ENCODE measurements at regions of chr11 and their contacts with region 1.

Region 1: DNA sequence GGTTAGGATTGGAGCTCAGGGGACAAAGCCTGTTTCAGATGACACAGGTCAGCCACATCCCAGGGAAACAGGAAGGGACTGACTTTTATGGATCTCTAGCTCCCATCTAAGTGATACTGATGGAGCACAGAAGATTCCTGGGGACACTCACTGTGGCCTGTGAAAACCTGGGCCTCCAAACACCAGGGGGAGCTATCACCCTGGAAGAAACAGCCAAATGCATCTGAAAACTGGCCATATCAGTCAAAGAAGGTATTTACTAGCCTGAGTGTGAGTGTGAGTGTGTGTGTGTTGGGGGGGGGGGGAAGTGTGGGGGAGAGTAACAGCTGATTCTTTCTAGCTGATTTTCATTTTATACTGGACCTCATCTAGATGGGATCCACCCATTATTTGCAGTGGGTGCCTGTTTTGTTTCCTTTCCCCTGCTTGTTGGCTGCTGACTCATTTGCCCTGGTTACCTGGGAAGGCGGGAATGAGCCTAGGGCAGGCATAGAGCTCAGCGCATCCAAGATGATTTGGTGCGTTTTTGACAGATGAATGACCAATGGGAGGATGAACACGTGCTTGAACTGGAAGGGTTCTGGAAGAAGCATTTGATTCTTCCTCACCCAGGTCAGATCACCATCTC is 284.0 kb downstream of the KIRREL3 start:
- DNase-seq: peak; percentile 3
- ATAC-seq: peak; percentile 75
- H3K4me3 ChIP-seq: no peak overlapping the region
- H3K27ac ChIP-seq: no peak overlapping the region
- H3K4me1 ChIP-seq: no peaks in the 10 kb centered on the region
- H3K27me3 ChIP-seq: peaks cover 1 to 27% of the 10 kb centered on the region in 2 experiments; a peak in 4 of 5 replicates
- CTCF ChIP-seq: peak; percentile 68
- EP300 ChIP-seq: no peak
- POLR2A ChIP-seq: no peak
- RAD21 ChIP-seq: no peak

Region 2: DNA sequence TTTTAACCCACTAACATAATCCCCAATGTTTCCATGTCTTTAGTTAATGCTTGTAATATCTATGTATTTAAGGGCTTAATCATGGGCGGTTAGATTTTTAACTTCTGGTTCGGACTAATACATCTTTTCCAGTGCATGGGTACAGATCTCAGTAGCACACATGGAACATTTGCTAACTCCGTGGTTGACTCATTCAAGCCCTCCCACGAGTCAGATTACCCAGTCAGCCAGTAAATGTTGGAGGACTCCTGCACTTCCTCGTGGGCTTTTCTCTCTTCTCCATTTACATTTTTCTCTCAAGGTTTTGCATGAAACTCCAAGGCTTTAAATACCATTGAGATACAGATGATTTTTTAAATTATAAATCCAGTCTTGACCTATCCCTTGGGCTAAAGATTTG is 47.2 kb before region 1 on chr11:
- CTCF ChIA-PET with region 1: no interaction called
- POLR2A ChIA-PET with region 1: no interaction called
- in situ Hi-C with region 1: no loop called
- intact Hi-C with region 1: no loop called
- DNase-seq: no peak
- ATAC-seq: no peak
- H3K4me3 ChIP-seq: no peak overlapping the region
- H3K27ac ChIP-seq: no peak overlapping the region
- H3K4me1 ChIP-seq: no peaks in the 10 kb centered on the region
- H3K27me3 ChIP-seq: peaks cover 1 to 8% of the 10 kb centered on the region in 2 experiments; a peak in 2 of 5 replicates
- CTCF ChIP-seq: no peak
- EP300 ChIP-seq: no peak
- POLR2A ChIP-seq: no peak
- RAD21 ChIP-seq: no peak

Region 3: DNA sequence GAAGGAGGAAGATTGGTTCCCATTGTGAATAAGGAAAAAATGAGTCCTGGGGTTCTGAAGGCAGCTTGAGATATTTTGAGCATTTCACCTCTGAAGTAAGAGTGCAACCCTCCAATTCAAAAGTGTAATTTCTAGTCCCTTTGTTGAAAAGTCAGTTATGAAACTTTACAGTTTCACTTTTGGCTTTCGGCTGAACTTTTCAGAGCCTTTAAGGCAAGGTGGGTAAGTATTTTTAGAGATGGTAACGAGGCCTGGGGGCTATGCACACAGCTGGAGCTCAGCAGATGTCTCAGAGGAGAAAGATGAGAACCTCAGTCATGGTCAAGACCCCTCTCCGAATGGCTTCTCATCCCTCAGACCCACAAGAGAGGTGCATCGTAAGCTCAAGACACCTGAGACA is 16.4 kb after region 1 on chr11:
- CTCF ChIA-PET with region 1: no interaction called
- POLR2A ChIA-PET with region 1: no interaction called
- in situ Hi-C with region 1: no loop called
- intact Hi-C with region 1: no loop called
- DNase-seq: no peak
- ATAC-seq: no peak
- H3K4me3 ChIP-seq: no peak overlapping the region
- H3K27ac ChIP-seq: no peak overlapping the region
- H3K4me1 ChIP-seq: no peaks in the 10 kb centered on the region
- H3K27me3 ChIP-seq: peaks cover 3 to 22% of the 10 kb centered on the region in 2 experiments; a peak in 2 of 5 replicates
- CTCF ChIP-seq: no peak
- EP300 ChIP-seq: no peak
- POLR2A ChIP-seq: no peak
- RAD21 ChIP-seq: no peak

Region 4: GRCh38 chr11:126989942-126990715 is 273.6 kb after region 1 on chr11:
- CTCF ChIA-PET with region 1: interaction called, 14 read pairs
- POLR2A ChIA-PET with region 1: no interaction called
- in situ Hi-C with region 1: loop called (anchors 5 kb)
- intact Hi-C with region 1: loop called (anchors 1 kb)
- DNase-seq: peak; percentile 38
- ATAC-seq: peak; percentile 97
- H3K4me3 ChIP-seq: no peak overlapping the region
- H3K27ac ChIP-seq: no peak overlapping the region
- H3K4me1 ChIP-seq: no peaks in the 10 kb centered on the region
- H3K27me3 ChIP-seq: peaks cover 3 to 22% of the 10 kb centered on the region in 2 experiments; a peak in 4 of 5 replicates
- CTCF ChIP-seq: peak; percentile 94
- EP300 ChIP-seq: no peak
- POLR2A ChIP-seq: no peak
- RAD21 ChIP-seq: peak; percentile 81

Region 5: GRCh38 chr11:127345819-127346459 is 629.4 kb after region 1 on chr11:
- CTCF ChIA-PET with region 1: no interaction called
- POLR2A ChIA-PET with region 1: no interaction called
- in situ Hi-C with region 1: no loop called
- intact Hi-C with region 1: loop called (anchors 5 kb)
- DNase-seq: peak; percentile 13
- ATAC-seq: 0 out of 3 replicates have a peak, but pooled peaks have one; percentile 44
- H3K4me3 ChIP-seq: no peak overlapping the region
- H3K27ac ChIP-seq: no peak overlapping the region
- H3K4me1 ChIP-seq: no peaks in the 10 kb centered on the region
- H3K27me3 ChIP-seq: no peaks in the 10 kb centered on the region
- CTCF ChIP-seq: peak; percentile 62
- EP300 ChIP-seq: no peak
- POLR2A ChIP-seq: no peak
- RAD21 ChIP-seq: no peak